Activated CD4-positive, alpha-beta T cell treated with anti-CD3 and anti-CD28 coated beads for 36 hours (primary cell): ENCODE measurements at regions of chr6 and their contacts with region 1.

Region 1: GRCh38 chr6:160455541-160456213 is 107.5 kb downstream of the SLC22A3 start:
- DNase-seq: peak; percentile 76
- ATAC-seq: peak; percentile 87
- H3K4me3 Mint-ChIP-seq: no peak overlapping the region
- H3K27ac Mint-ChIP-seq: no peak overlapping the region
- H3K4me1 Mint-ChIP-seq: peaks cover 25% of the 10 kb centered on the region
- H3K27me3 Mint-ChIP-seq: peaks cover 16% of the 10 kb centered on the region

Region 2: GRCh38 chr6:159862103-159862502 is 593.6 kb before region 1 on chr6:
- CTCF ChIA-PET with region 1: interaction called, 3 read pairs
- POLR2A ChIA-PET with region 1: no interaction called
- intact Hi-C with region 1: loop called in 1 of 2 experiments (anchors 2 kb)
- DNase-seq: no peak
- ATAC-seq: peak; percentile 19
- H3K4me3 Mint-ChIP-seq: no peak overlapping the region
- H3K27ac Mint-ChIP-seq: peak overlapping the region; percentile 0
- H3K4me1 Mint-ChIP-seq: peaks cover 15% of the 10 kb centered on the region
- H3K27me3 Mint-ChIP-seq: peaks cover 2% of the 10 kb centered on the region

Region 3: DNA sequence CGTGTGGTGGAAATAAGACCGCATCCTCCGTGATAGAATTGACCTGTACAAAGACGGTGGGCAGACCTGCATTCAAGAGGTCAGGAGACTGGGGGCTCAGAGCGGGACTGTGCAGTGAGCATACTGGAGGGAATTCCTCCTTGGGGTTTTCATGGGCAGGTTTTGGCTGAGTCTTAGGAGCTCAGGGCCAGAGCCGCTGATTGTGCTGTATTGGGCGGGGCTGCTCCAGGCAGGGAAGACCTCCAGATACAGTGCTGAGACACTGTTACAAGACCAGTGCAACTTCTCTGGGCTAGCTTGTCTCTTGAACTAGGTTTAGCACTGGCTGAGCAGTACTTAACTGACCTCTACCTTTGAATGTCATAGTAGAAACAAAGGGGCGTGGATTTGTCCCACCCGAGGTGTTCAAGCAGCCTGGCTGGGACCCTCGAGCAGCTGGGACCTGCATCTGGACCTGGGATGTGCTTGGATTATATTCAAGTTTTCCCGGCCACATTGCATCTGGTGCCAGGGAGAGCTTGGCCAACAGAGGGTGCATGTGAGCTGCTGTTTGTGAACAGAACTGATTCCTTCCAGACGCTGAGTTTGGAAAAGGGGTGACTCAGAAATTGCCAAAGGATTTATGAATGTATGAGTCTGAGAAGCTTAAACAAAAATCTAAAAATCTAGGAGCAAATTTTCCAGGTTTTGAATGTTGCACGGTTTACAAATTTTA is 367.5 kb before region 1 on chr6:
- CTCF ChIA-PET with region 1: interaction called, 5 read pairs
- POLR2A ChIA-PET with region 1: no interaction called
- intact Hi-C with region 1: loop called in 1 of 2 experiments (anchors 5 kb)
- DNase-seq: peak; percentile 17
- ATAC-seq: no peak
- H3K4me3 Mint-ChIP-seq: no peak overlapping the region
- H3K27ac Mint-ChIP-seq: no peak overlapping the region
- H3K4me1 Mint-ChIP-seq: peaks cover 4% of the 10 kb centered on the region
- H3K27me3 Mint-ChIP-seq: no peaks in the 10 kb centered on the region

Region 4: DNA sequence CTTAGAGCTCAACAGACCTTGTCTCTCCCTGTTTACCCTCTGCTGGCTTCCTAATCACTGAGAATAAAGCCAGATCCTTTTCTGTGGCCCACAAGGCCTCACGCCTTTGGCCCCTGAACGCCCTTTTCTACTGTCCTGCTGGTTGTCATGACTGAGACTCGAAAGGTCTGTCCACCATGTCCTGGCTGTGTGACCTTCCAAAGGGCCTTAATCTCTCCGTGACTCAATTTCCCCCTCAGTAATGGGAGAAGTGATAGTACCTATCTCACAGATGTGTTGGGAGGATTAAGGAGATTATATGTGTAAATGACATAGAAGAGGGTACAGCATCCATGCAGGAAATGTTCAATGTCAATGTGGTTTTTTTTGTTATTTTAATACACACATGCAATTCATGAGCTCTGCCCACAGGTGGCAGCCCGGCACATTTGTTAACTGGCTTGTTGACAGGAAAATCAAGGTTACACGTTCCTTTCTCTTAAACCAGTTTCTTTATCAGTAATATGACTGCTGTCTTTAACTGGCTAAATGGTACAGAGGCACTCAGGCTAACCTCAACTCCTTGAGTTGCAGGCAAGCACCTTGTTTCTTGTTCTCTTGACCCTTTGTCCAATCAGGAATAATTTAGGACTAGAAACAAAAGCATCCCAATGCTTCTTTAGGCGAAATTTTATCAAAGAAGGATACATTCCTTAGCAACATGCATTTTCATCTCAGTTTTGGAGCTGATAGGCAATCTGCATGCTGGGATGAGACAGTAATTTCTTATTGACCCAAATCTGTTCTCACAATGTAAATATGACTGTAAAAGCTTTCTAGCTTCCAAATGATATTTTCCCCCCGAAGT is 317.5 kb before region 1 on chr6:
- CTCF ChIA-PET with region 1: interaction called, 25 read pairs
- POLR2A ChIA-PET with region 1: no interaction called
- intact Hi-C with region 1: loop called (anchors 1 kb)
- DNase-seq: peak; percentile 86
- ATAC-seq: peak; percentile 69
- H3K4me3 Mint-ChIP-seq: no peak overlapping the region
- H3K27ac Mint-ChIP-seq: peak overlapping the region; percentile 26
- H3K4me1 Mint-ChIP-seq: peaks cover 15% of the 10 kb centered on the region
- H3K27me3 Mint-ChIP-seq: no peaks in the 10 kb centered on the region

Region 5: DNA sequence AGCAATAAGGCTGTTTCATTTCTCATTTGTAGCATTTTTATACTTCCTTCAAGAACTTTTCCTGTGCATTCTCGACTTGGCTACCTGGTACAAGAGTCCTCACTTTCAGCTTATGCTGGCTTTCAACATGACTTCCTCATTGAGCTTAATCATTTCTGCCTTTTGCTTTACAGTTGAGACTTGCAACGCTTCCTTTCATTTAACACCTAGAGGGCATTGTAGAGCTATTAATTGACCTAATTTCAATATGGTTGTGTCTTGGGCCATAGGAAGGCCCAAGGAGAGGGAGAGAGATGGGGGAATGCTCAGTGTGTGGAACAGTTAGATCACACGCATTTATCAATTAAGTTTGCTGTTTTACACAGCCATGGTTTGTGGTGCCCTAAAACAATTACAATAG is 234.3 kb before region 1 on chr6:
- CTCF ChIA-PET with region 1: no interaction called
- POLR2A ChIA-PET with region 1: no interaction called
- intact Hi-C with region 1: loop called (anchors 2 to 5 kb)
- DNase-seq: no peak
- ATAC-seq: peak; percentile 30
- H3K4me3 Mint-ChIP-seq: no peak overlapping the region
- H3K27ac Mint-ChIP-seq: no peak overlapping the region
- H3K4me1 Mint-ChIP-seq: peaks cover 10% of the 10 kb centered on the region
- H3K27me3 Mint-ChIP-seq: peaks cover 31% of the 10 kb centered on the region

Region 6: GRCh38 chr6:160534050-160534696 is 78.5 kb after region 1 on chr6:
- CTCF ChIA-PET with region 1: no interaction called
- POLR2A ChIA-PET with region 1: no interaction called
- intact Hi-C with region 1: loop called (anchors 1 kb)
- DNase-seq: peak; percentile 71
- ATAC-seq: peak; percentile 76
- H3K4me3 Mint-ChIP-seq: no peak overlapping the region
- H3K27ac Mint-ChIP-seq: no peak overlapping the region
- H3K4me1 Mint-ChIP-seq: no peaks in the 10 kb centered on the region
- H3K27me3 Mint-ChIP-seq: peaks cover 2% of the 10 kb centered on the region